ENCODE measurements at regions of chr11 and their contacts with region 1.

Region 1: GRCh38 chr11:126440792-126441514 is 85.5 kb downstream of the ST3GAL4 start:
- DNase-seq: peak; percentile 74
- H3K4me3 ChIP-seq: no peak overlapping the region
- H3K27ac ChIP-seq: no peak overlapping the region
- H3K4me1 ChIP-seq: no peaks in the 10 kb centered on the region
- H3K27me3 ChIP-seq: no peaks in the 10 kb centered on the region
- CTCF ChIP-seq: peak; percentile 84 to 88
- POLR2A ChIP-seq: no peak

Region 2: DNA sequence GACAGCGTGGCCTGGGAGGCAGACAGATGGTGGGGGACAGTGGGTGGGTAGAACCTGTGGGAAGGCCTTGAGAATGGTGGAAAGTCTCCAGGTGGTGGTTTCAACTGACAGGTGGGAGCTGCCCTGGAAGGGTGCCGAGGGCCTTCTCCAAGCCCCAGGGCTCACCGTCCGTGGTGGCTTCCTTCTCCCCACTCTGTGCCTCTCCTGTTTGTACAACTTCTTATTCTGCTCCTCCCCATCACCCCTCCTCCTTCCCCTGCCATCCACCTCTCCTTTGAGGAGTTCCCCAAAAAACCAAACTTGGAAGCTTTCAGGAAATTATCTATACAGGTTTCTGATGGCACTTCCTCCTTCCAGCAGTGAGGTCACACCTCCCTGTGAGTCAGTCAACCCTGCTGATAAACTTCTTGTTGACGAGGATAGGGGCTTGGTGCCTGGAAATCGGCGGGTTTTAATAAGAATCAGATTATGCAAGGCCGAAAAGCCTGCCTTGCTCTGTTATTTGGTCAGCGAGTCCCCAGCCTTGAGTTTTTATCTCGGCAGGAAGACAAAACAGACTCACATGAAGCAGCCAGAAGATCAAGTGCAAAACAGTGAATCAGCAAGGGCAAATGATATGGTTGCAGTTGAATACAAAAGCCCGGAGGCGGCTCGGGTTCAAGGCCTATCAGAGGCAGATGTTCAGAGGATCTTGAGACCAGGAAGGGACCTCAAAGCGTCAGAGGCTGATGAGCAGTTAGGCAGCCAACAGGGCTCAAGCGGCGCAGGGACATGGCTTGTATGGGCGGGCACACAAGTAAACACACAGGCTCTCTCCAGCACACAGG is 95.0 kb before region 1 on chr11:
- CTCF ChIA-PET with region 1: no interaction called
- POLR2A ChIA-PET with region 1: no interaction called
- dilution Hi-C with region 1: no loop called
- intact Hi-C with region 1: no loop called
- DNase-seq: peak; percentile 59
- H3K4me3 ChIP-seq: no peak overlapping the region
- H3K27ac ChIP-seq: peak overlapping the region; percentile 77
- H3K4me1 ChIP-seq: peaks cover 50% of the 10 kb centered on the region
- H3K27me3 ChIP-seq: no peaks in the 10 kb centered on the region
- CTCF ChIP-seq: no peak
- POLR2A ChIP-seq: no peak

Region 3: DNA sequence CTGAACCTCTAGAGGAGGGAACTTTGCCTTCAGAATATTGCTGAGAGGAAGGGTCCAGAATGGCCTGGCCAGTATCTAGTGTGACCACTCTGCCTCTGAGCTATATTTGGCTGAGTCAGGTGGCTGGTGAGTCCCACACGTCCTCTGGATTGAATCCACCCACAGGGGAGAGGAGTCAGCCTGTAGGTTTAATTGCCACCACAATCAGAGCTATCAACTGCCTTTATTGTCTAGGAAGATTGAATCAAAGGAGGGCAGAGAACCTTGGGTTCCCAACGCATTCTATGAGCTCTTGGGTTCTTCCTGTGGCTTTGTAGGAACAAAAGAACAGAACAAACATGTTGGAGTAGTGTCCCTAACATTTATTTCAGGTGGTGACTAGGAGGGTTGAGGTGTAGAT is 17.8 kb before region 1 on chr11:
- CTCF ChIA-PET with region 1: interaction called, 15 read pairs
- POLR2A ChIA-PET with region 1: interaction called, 3 read pairs
- dilution Hi-C with region 1: no loop called
- intact Hi-C with region 1: no loop called
- DNase-seq: no peak
- H3K4me3 ChIP-seq: no peak overlapping the region
- H3K27ac ChIP-seq: no peak overlapping the region
- H3K4me1 ChIP-seq: peaks cover 2% of the 10 kb centered on the region
- H3K27me3 ChIP-seq: no peaks in the 10 kb centered on the region
- CTCF ChIP-seq: no peak
- POLR2A ChIP-seq: no peak

Region 4: DNA sequence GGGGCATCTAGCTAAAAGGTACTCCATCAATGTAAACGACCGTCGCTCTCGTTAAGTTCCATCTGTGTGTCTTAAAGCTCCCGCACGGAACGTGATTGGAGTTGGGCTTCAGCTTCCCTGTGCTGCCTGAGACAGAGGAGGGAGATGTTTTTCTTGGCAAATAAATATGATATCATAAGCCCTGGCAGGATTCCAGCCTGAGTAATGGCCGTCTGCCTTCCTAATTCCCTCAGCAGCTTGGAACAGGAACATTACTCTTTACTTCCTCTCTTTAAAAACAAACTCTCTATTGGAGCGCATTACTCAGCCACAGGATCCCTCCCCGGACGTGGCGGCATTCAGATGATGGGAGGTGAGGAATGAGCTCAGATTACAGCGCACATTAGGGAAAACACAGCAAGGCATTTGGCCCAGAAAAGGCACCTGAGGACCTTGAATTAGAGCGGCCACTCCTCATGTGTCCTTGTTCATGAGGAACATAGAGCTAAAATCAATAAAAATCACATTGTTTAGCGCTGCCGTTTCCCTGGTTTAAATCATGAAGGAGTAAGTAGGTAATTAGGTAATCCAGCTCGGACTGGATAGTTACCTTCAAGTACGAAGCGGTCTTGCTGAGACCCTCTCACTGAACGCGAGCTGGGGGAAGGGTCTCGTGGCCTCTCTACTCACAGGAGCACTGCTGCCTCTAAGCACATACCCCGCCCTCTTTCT is 145.0 kb after region 1 on chr11:
- CTCF ChIA-PET with region 1: interaction called, 4 read pairs
- POLR2A ChIA-PET with region 1: no interaction called
- dilution Hi-C with region 1: no loop called
- intact Hi-C with region 1: loop called (anchors 5 kb)
- DNase-seq: peak; percentile 99
- H3K4me3 ChIP-seq: peak overlapping the region in 1 of 3 experiments; percentile 28
- H3K27ac ChIP-seq: peak overlapping the region; percentile 82
- H3K4me1 ChIP-seq: peaks cover 11% of the 10 kb centered on the region
- H3K27me3 ChIP-seq: no peaks in the 10 kb centered on the region
- CTCF ChIP-seq: no peak
- POLR2A ChIP-seq: no peak

Region 5: GRCh38 chr11:126607374-126607773 is 166.4 kb after region 1 on chr11:
- CTCF ChIA-PET with region 1: interaction called, 3 read pairs
- POLR2A ChIA-PET with region 1: no interaction called
- dilution Hi-C with region 1: no loop called
- intact Hi-C with region 1: loop called (anchors 2 kb)
- DNase-seq: peak; percentile 5
- H3K4me3 ChIP-seq: no peak overlapping the region
- H3K27ac ChIP-seq: no peak overlapping the region
- H3K4me1 ChIP-seq: no peaks in the 10 kb centered on the region
- H3K27me3 ChIP-seq: no peaks in the 10 kb centered on the region
- CTCF ChIP-seq: peak; percentile 42 to 61
- POLR2A ChIP-seq: no peak

Region 6: DNA sequence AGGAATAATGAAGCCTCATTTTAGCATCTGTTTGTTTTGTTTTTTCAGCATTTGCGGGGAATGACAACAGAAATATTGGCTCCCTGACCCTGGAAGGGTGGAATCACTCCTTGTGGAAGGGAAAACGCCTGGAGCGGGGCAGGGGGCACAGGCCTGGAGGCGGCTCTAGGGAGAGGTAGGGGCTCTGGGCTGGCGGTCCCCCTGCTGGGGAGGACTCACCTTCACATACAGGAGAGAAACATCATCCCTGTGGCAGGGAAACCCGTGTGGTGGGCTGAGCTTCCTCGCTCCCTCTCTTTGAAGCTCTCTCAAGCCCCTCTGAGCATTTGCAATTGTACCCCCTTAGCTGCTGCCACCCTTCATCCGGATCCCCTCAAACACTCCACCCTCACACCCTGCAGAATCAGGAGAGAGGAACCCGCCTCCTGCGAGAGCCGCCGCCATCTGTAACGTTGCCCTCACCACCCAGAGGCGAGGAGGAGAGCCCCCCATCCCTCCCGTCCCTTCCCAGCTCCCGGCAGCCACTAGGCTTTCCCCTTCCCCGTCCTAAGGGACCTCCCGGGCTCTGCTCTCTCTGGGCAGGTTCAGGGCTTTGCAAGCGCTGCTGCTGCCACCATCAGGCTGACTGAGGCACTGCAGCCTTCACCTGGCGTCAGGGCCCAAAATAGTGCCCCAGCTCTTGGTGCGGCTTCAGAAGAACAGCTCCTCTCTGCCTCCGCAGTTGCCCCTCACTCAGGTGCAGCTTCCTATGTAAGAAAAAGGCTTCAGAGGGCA is 549.2 kb after region 1 on chr11:
- CTCF ChIA-PET with region 1: interaction called, 39 read pairs
- POLR2A ChIA-PET with region 1: no interaction called
- dilution Hi-C with region 1: no loop called
- intact Hi-C with region 1: loop called (anchors 1 kb)
- DNase-seq: peak; percentile 35
- H3K4me3 ChIP-seq: no peak overlapping the region
- H3K27ac ChIP-seq: no peak overlapping the region
- H3K4me1 ChIP-seq: no peaks in the 10 kb centered on the region
- H3K27me3 ChIP-seq: no peaks in the 10 kb centered on the region
- CTCF ChIP-seq: peak; percentile 76 to 96
- POLR2A ChIP-seq: no peak

Region 7: GRCh38 chr11:128026596-128026995 is 1585.6 kb after region 1 on chr11:
- CTCF ChIA-PET with region 1: interaction called, 7 read pairs
- POLR2A ChIA-PET with region 1: no interaction called
- dilution Hi-C with region 1: no loop called
- intact Hi-C with region 1: loop called (anchors 2 kb)
- DNase-seq: peak; percentile 81
- H3K4me3 ChIP-seq: no peak overlapping the region
- H3K27ac ChIP-seq: peak overlapping the region; percentile 39
- H3K4me1 ChIP-seq: peaks cover 25% of the 10 kb centered on the region
- H3K27me3 ChIP-seq: no peaks in the 10 kb centered on the region
- CTCF ChIP-seq: no peak
- POLR2A ChIP-seq: no peak

Measured in endothelial cell of umbilical vein (primary cell).